Activated naive CD4-positive, alpha-beta T cell treated with anti-CD3 and anti-CD28 coated beads for 36 hours (primary cell): ENCODE measurements at regions of chr17 and their contacts with region 1.

Region 1: DNA sequence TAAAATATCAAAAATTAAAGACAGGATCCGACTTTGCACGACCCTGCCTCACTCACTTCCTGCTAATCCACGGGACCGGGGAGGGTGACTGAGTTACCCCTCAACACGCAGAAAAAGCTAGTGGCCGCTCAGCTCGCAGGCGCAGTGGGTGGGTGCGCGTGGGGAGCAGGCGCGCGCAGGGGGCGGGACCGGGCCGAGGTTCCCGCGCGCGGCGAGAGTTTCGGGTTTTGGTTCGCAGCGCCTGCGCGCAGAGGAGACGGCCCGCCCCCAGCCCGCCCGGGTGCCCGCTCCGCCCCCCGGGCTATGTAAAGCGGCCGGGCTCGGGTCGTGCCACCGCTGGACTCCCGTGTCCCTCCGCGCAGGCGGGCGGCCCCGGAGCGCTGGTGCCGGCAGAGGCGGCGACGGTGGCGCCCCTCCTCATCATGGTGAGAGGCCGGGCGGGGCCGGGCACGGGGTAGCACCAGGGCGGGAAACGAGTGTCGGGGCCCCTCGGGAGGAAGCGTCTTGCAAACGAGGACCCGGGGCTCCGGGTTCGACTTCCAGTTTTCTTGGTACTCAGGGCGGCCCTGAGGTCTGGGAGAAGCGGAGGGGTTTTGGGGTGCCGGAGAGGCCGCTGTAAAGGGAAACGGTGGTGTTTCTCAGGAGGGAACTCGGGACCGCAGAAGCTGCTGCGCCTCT is at the start of gene CNP:
- DNase-seq: peak; percentile 88
- H3K4me3 Mint-ChIP-seq: peak within 1 kb of the TSS; percentile 80
- H3K27ac Mint-ChIP-seq: peak within 1 kb of the TSS; percentile 86
- H3K4me1 Mint-ChIP-seq: peaks cover 38% of the 10 kb centered on the region
- H3K27me3 Mint-ChIP-seq: no peaks in the 10 kb centered on the region
- total RNA-seq, gene CNP: 58.4 to 59.1 TPM

Region 2: DNA sequence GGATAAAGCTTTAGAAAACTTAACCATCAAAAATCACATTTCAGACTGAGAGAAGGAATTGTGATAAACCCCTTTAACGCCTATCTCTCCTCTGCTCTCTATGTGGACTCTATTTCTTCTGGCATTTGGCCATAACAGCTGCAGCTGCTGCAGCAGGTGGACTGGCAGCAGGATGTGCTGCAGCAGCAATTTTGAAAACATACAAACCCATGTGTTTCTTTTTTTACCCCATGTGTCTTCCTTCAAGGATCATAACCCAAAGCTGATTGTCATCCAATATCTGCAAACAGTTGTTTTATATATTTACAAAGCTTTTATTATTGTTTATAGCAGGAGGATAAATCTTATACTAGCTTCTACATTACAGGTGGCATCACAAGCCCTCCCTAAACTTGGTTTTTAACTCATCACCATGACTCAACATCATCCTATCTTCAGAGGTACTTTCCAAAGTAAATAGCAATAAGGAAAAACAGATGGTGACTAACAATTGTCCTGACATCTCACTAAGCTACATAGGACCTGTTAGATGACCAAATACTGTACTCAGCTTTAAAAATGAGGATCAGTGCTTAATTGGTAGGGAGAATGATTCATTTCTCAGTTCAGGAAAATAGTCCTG is 754.6 kb before region 1 on chr17:
- CTCF ChIA-PET with region 1: no interaction called
- intact Hi-C with region 1: no loop called
- DNase-seq: no peak
- H3K4me3 Mint-ChIP-seq: no peak overlapping the region
- H3K27ac Mint-ChIP-seq: no peak overlapping the region
- H3K4me1 Mint-ChIP-seq: peaks cover 2% of the 10 kb centered on the region
- H3K27me3 Mint-ChIP-seq: no peaks in the 10 kb centered on the region

Region 3: DNA sequence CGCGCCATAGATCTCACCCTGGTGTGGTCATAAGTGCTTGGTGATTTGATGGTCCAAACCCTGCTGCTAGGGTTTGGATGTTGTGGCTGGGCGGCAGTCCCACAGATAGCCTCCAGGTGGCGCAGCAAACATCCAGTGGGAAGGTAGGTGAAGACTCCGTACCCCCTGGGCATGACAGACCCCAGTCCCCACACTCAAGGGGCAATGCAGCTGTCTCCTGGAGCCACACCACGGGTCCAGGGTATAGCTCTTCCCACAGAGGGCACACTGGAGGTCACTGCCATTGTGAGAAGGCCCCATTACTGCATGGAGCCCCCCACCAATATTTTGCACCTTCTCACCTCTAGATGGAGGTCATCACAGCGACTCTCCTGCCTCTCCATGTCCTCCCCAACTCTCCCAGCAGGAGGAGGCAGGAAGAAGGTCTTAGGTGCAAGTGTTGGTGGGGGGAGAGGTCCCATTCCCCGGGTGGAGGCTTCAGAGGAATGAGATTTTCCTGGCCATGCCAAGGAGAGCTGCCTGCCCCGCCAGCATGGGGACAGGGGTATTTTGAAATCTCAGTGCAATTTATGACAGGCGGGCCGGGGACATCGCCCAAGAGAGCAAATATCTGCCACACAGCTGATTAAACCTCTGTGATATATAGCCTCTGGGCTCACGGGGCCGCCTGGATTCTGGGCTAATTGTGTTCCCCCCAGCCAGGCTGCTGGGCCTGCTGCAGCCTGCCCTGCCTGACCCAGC is 100.9 kb after region 1 on chr17:
- CTCF ChIA-PET with region 1: interaction called, 7 read pairs
- intact Hi-C with region 1: loop called (anchors 1 kb)
- DNase-seq: peak; percentile 83
- H3K4me3 Mint-ChIP-seq: no peak overlapping the region
- H3K27ac Mint-ChIP-seq: no peak overlapping the region
- H3K4me1 Mint-ChIP-seq: peaks cover 22% of the 10 kb centered on the region
- H3K27me3 Mint-ChIP-seq: peaks cover 15% of the 10 kb centered on the region

Region 4: DNA sequence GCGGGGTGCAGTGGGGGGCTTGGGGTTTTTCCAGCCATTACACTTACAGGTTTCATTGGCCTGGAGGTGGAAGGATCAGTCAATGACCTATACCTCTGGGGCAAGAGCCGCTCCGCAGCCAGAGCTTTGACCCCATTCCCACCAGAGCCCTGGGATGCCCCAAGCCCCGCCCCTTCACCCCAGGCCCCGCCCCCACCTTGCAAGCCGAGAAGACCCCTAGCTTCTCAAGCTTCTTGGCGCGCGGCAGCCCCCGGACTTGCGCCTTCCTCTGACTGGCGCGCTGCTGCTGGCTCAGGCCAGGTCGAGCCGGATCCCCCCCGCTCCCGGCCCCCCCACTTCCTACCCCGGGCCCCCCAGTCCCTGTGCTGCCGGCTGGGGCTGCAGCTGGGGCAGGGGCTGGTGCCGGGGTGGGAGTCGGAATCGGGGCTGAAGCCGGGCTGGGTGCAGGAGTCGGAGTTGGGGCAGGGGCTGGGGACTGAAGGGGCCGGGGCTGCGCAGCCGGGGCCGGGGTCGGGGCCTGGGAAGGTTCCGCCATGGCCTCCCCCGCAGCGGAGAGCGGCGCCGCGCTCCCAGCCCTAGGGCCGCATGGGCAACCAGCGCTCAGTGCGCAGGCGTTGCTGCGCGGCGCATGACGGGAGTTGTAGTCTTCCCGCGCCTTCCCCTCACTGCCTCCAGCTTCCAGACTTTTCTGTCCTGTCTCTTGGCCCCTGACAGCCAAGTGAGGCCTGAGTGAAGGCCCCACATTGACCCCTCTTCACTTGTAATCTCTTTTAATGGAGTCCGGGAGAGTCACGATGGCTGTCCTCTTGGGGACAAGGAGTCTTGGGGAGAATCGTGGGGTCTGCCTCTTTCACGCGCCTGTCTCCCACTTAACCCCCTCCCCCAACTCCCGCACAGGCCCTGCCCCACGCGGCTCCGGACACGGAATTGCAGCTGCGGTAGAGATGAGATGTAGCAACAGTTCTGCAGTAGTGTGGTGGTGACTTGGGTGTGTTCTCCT is 154.5 kb after region 1 on chr17 and contains the start of gene KAT2A:
- CTCF ChIA-PET with region 1: interaction called, 29 read pairs
- intact Hi-C with region 1: loop called (anchors 1 kb)
- DNase-seq: peak; percentile 80
- H3K4me3 Mint-ChIP-seq: peak within 1 kb of the TSS; percentile 59
- H3K27ac Mint-ChIP-seq: peak within 1 kb of the TSS; percentile 72
- H3K4me1 Mint-ChIP-seq: peaks cover 28% of the 10 kb centered on the region
- H3K27me3 Mint-ChIP-seq: no peaks in the 10 kb centered on the region
- total RNA-seq, gene KAT2A: 57.3 to 59.0 TPM

Region 5: GRCh38 chr17:42153919-42154742 is 187.5 kb after region 1 on chr17:
- CTCF ChIA-PET with region 1: interaction called, 3 read pairs
- intact Hi-C with region 1: loop called (anchors 1 kb)
- DNase-seq: no peak
- H3K4me3 Mint-ChIP-seq: peak overlapping the region; percentile 83
- H3K27ac Mint-ChIP-seq: peak overlapping the region; percentile 87
- H3K4me1 Mint-ChIP-seq: peaks cover 39% of the 10 kb centered on the region
- H3K27me3 Mint-ChIP-seq: no peaks in the 10 kb centered on the region